Activated T-helper 1 cell treated with anti-CD3 and anti-CD28 coated beads, Interleukin-12 subunit alpha, Interleukin-12 subunit beta, Interleukin-2, Interleukin-4 antibody, amounts not matched to agents 30 ng/mL and 10 ng/mL and 1 ng/mL, durations not matched to agents 14 hours and 24 hours and 36 hours (primary cell): ENCODE measurements at regions of chr2 and their contacts with region 1.

Region 1: DNA sequence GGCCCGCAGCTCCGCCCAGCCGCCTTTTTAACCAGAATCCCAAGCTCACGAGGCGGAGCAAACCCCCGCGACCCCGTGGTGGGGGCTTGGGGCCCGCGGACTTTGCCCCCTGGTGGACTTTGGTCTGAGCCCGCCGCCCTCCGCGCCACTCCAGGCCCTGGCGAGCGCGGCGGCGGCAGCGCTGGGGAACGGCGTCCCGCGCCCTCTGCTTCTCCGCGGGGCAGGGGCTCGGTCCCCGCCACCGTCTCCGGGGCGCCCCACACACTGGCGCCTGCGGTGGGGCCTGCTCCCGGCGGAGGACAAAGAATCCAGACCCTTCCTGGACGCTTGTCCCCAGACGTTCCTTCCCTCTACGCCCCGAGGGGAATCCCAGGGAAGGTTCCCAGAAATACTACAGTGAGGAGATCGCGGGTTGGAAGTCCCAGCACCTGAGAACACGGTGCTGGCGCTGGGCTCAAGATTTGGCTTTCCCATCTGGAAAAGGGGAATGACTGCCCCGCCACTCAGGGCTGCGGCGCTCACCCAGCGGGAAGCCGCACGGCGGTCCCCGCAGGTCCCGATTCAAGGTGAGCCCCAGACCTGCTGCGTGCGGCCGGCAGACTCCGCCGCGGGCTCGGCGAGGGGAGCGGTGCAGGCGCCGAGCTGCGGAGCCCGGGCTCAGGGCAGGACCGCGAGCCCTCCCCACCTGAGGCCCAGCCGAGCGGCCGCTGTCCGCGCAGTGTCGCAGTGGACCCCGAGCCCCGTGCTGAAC is at the start of gene HAAO:
- DNase-seq: no peak
- H3K4me3 Mint-ChIP-seq: peak within 1 kb of the TSS; percentile 76
- H3K27ac Mint-ChIP-seq: peak within 1 kb of the TSS; percentile 59
- H3K4me1 Mint-ChIP-seq: peaks cover 26% of the 10 kb centered on the region
- H3K27me3 Mint-ChIP-seq: peaks cover 38% of the 10 kb centered on the region
- total RNA-seq, gene HAAO: 0.37 and 0.86 TPM in 2 replicates

Region 2: GRCh38 chr2:42722320-42723190 is 70.2 kb before region 1 on chr2:
- intact Hi-C with region 1: loop called (anchors 5 kb)
- DNase-seq: peak; percentile 28
- H3K4me3 Mint-ChIP-seq: peak overlapping the region; percentile 11
- H3K27ac Mint-ChIP-seq: peak overlapping the region; percentile 45
- H3K4me1 Mint-ChIP-seq: peaks cover 13% of the 10 kb centered on the region
- H3K27me3 Mint-ChIP-seq: no peaks in the 10 kb centered on the region

Region 3: GRCh38 chr2:42777883-42778805 is 14.6 kb before region 1 on chr2:
- intact Hi-C with region 1: no loop called
- DNase-seq: no peak
- H3K4me3 Mint-ChIP-seq: no peak overlapping the region
- H3K27ac Mint-ChIP-seq: no peak overlapping the region
- H3K4me1 Mint-ChIP-seq: peaks cover 9% of the 10 kb centered on the region
- H3K27me3 Mint-ChIP-seq: no peaks in the 10 kb centered on the region